Dorsolateral prefrontal cortex (tissue), 120 donors: ENCODE measurements at regions of chr2 and their contacts with region 1.

Region 1: DNA sequence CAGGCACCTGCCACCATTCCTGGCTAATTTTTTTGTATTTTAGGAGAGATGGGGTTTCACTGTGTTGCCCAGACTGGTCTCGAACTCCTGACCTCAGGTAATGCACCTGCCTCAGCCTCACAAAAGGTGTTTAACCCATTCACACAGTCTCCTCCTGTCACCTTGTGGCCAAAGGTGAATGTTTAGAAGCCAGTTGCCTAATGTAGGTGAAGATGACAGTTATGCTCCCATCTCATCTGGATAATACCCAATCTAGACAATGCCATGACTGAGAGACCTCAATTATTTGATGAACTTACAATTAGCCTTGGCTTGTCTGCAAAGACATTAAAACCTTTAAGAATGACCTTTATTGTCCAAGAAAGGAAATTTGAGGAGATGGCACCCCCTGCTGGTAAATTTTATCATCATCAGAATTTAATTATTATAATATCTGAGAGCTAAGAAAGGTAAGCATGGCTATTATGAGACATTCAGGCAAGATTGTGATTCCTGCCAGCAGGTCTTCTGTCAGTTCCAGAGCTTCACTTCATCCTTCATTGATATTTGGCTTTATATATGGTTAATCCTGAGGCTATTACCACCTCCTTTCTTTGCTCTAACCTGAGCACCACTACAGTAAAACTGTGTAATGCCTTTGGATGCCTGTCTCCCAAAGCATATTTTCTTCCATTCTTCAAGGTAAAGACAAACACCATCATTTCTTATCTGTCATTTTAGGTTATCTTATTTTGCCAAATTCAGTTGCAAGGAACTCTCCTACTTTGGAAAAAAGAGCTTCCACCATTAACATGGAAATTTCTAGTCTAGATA is 117.6 kb downstream of the FAM124B start:
- DNase-seq: no peak
- H3K4me3 ChIP-seq: no peak overlapping the region
- H3K27ac ChIP-seq: no peak overlapping the region
- H3K27me3 ChIP-seq: no peaks in the 10 kb centered on the region
- CTCF ChIP-seq: peak; percentile 63 to 95 (median 82)

Region 2: GRCh38 chr2:223970343-223971128 is 313.8 kb before region 1 on chr2:
- intact Hi-C with region 1: loop called (anchors 1 to 2 kb)
- DNase-seq: peak in 2 of 10 donors; percentile 23 to 43
- H3K4me3 ChIP-seq: no peak overlapping the region
- H3K27ac ChIP-seq: no peak overlapping the region
- H3K27me3 ChIP-seq: no peaks in the 10 kb centered on the region
- CTCF ChIP-seq: peak; percentile 83 to 99 (median 96)